ENCODE measurements at regions of chr1 and their contacts with region 1.

Region 1: DNA sequence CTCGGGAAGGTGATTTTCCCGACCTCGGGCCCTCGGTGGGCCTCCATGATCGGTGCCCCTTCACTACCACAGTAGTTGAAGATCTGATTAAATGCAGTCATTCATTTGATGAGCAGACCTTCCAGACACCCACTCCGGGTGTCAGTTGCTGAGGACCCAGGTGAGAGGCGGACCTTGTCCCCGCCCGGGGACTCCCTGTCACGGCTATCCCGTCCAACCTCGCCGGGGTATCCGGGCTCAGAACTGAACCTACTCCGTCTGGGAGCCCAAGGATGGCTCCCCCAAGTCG is 22.6 kb downstream of the RNU1-3 start:
- DNase-seq: no peak
- H3K4me3 Mint-ChIP-seq: no peak overlapping the region
- H3K27ac Mint-ChIP-seq: no peak overlapping the region
- H3K4me1 Mint-ChIP-seq: no peaks in the 10 kb centered on the region
- H3K27me3 Mint-ChIP-seq: peaks cover 6% of the 10 kb centered on the region

Region 2: DNA sequence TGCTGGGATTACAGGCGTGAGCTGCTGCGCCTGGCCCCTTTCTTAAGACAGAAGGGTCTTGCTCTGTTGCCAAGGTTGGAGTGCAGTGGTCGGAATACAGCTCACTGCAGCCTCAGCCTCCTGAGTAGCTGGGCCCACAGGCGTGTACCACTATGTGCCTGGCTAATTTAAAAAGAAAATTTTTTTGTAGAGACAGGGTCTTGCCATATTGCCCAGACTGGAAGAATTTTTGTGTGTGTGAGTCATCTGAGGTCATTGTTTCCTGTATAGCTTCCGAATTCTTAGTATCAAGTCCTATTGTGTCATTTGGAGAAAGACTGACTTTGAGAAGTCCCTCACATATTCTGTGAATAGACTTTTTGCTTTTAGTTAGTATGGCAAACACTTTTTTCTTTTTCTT is 272.4 kb before region 1 on chr1:
- intact Hi-C with region 1: no loop called
- DNase-seq: no peak
- H3K4me3 Mint-ChIP-seq: peak overlapping the region; percentile 75
- H3K27ac Mint-ChIP-seq: peak overlapping the region; percentile 86
- H3K4me1 Mint-ChIP-seq: peaks cover 72% of the 10 kb centered on the region
- H3K27me3 Mint-ChIP-seq: no peaks in the 10 kb centered on the region

Region 3: GRCh38 chr1:16613185-16614147 is 30.7 kb before region 1 on chr1 and contains the start of gene NBPF1:
- intact Hi-C with region 1: loop called (anchors 1 kb)
- DNase-seq: peak; percentile 87
- H3K4me3 Mint-ChIP-seq: no peak within 1 kb of the TSS
- H3K27ac Mint-ChIP-seq: no peak within 1 kb of the TSS
- H3K4me1 Mint-ChIP-seq: no peaks in the 10 kb centered on the region
- H3K27me3 Mint-ChIP-seq: no peaks in the 10 kb centered on the region
- total RNA-seq, gene NBPF1: 4.4 and 6.1 TPM in 2 replicates

Region 4: GRCh38 chr1:16677552-16678431 is 33.7 kb after region 1 on chr1:
- intact Hi-C with region 1: no loop called
- DNase-seq: no peak
- H3K4me3 Mint-ChIP-seq: no peak overlapping the region
- H3K27ac Mint-ChIP-seq: peak overlapping the region; percentile 37
- H3K4me1 Mint-ChIP-seq: no peaks in the 10 kb centered on the region
- H3K27me3 Mint-ChIP-seq: peaks cover 29% of the 10 kb centered on the region

Region 5: GRCh38 chr1:16904560-16905111 is 260.5 kb after region 1 on chr1:
- intact Hi-C with region 1: loop called (anchors 2 kb)
- DNase-seq: peak; percentile 99
- H3K4me3 Mint-ChIP-seq: no peak overlapping the region
- H3K27ac Mint-ChIP-seq: no peak overlapping the region
- H3K4me1 Mint-ChIP-seq: peaks cover 19% of the 10 kb centered on the region
- H3K27me3 Mint-ChIP-seq: no peaks in the 10 kb centered on the region

Measured in activated T-helper 1 cell treated with anti-CD3 and anti-CD28 coated beads, Interleukin-12 subunit alpha, Interleukin-12 subunit beta, Interleukin-2, Interleukin-4 antibody, amounts not matched to agents 30 ng/mL and 10 ng/mL and 1 ng/mL, durations not matched to agents 14 hours and 24 hours and 36 hours (primary cell).